ENCODE measurements at regions of chr5 and their contacts with region 1.

Region 1: GRCh38 chr5:154092356-154093141 is 53.8 kb downstream of the MFAP3 start:
- DNase-seq: no peak
- H3K4me3 ChIP-seq: no peak overlapping the region
- H3K27ac ChIP-seq: no peak overlapping the region
- H3K4me1 ChIP-seq: peaks cover 0 to 5% (median under 1%) of the 10 kb centered on the region in 4 experiments; a peak in 2 of 7 replicates
- H3K27me3 ChIP-seq: no peaks in the 10 kb centered on the region
- CTCF ChIP-seq: no peak
- EP300 ChIP-seq: no peak
- POLR2A ChIP-seq: no peak
- RAD21 ChIP-seq: no peak

Region 2: GRCh38 chr5:153974131-153974812 is 118.3 kb before region 1 on chr5:
- CTCF ChIA-PET with region 1: no interaction called
- POLR2A ChIA-PET with region 1: no interaction called
- DNase-seq: peak in 1 of 2 experiments; percentile 60
- H3K4me3 ChIP-seq: no peak overlapping the region
- H3K27ac ChIP-seq: no peak overlapping the region
- H3K4me1 ChIP-seq: no peaks in the 10 kb centered on the region
- H3K27me3 ChIP-seq: peaks cover 0 to 2% (median 0%) of the 10 kb centered on the region in 4 experiments; a peak in 1 of 7 replicates
- CTCF ChIP-seq: peak in 2 of 3 experiments; percentile 71 to 74; a peak in 3 of 4 replicates
- EP300 ChIP-seq: no peak
- POLR2A ChIP-seq: no peak
- RAD21 ChIP-seq: peak; percentile 93 to 96

Region 3: DNA sequence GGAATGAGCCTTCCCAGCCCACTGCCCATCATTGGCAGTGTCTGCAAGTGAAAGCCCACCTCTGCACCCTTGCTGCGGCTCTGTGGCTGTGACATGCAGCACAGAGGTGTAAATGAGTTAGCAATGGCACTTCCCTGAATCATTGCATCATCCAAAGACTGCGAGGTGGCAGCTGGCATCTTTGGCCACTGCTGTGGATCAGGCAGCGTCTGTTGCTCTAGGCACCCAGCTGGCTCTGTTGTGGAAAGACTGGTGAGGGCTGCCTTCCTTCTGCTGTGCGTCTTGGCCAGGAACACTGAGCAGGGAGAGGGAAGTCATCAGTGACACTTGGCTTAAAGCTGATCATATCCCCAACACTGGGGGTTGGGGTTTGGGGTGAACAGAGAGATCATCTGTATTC is 10.7 kb after region 1 on chr5:
- CTCF ChIA-PET with region 1: interaction called, 24 read pairs
- POLR2A ChIA-PET with region 1: interaction called, 3 read pairs
- DNase-seq: no peak
- H3K4me3 ChIP-seq: no peak overlapping the region
- H3K27ac ChIP-seq: no peak overlapping the region
- H3K4me1 ChIP-seq: peaks cover 3 to 17% (median 6%) of the 10 kb centered on the region in 4 experiments
- H3K27me3 ChIP-seq: no peaks in the 10 kb centered on the region
- CTCF ChIP-seq: no peak
- EP300 ChIP-seq: no peak
- POLR2A ChIP-seq: no peak
- RAD21 ChIP-seq: no peak

Region 4: GRCh38 chr5:154112255-154112654 is 19.7 kb after region 1 on chr5:
- CTCF ChIA-PET with region 1: interaction called, 10 read pairs
- POLR2A ChIA-PET with region 1: interaction called, 3 read pairs
- DNase-seq: no peak
- H3K4me3 ChIP-seq: no peak overlapping the region
- H3K27ac ChIP-seq: no peak overlapping the region
- H3K4me1 ChIP-seq: peaks cover 8 to 24% (median 21%) of the 10 kb centered on the region in 4 experiments
- H3K27me3 ChIP-seq: no peaks in the 10 kb centered on the region
- CTCF ChIP-seq: no peak
- EP300 ChIP-seq: no peak
- POLR2A ChIP-seq: no peak
- RAD21 ChIP-seq: no peak

Region 5: GRCh38 chr5:154249826-154250225 is 157.3 kb after region 1 on chr5:
- CTCF ChIA-PET with region 1: no interaction called
- POLR2A ChIA-PET with region 1: no interaction called
- DNase-seq: no peak
- H3K4me3 ChIP-seq: no peak overlapping the region
- H3K27ac ChIP-seq: no peak overlapping the region
- H3K4me1 ChIP-seq: peaks cover 0 to 2% (median 0%) of the 10 kb centered on the region in 4 experiments; a peak in 1 of 7 replicates
- H3K27me3 ChIP-seq: no peaks in the 10 kb centered on the region
- CTCF ChIP-seq: no peak
- EP300 ChIP-seq: no peak
- POLR2A ChIP-seq: no peak
- RAD21 ChIP-seq: no peak